ENCODE measurements at regions of chr1 and their contacts with region 1.

Region 1: DNA sequence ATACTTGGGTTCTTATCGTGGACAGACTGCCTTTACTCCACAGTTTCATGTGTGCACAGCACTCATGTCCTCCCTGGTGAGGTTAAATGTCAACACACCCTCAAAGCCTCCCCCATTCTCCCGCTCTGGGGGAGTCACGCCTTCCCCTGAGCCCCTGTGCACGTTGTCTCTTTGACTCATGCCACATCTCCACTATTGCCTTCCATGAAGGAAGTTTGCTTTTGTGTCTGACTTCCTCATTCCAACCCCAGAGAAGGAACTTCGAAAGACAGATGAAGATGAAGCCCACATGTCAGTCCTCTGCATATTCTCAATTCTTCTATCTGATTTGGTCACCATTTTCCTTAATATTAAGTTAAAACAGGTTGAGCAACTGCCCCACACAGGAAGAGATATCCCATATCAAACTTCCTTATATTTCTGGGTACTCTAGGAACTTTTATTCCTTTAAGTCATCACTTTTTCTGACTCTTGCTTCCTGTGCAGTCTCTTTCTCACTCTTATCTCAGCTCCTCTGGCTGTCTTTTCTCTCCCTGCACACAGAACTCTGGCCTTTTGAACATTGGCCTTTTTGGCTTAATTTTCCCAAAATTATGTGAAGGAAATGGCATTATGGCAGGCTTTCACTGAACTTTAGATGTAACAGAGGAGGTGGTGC is 41.5 kb downstream of the C4BPA start:
- DNase-seq: no peak

Region 2: DNA sequence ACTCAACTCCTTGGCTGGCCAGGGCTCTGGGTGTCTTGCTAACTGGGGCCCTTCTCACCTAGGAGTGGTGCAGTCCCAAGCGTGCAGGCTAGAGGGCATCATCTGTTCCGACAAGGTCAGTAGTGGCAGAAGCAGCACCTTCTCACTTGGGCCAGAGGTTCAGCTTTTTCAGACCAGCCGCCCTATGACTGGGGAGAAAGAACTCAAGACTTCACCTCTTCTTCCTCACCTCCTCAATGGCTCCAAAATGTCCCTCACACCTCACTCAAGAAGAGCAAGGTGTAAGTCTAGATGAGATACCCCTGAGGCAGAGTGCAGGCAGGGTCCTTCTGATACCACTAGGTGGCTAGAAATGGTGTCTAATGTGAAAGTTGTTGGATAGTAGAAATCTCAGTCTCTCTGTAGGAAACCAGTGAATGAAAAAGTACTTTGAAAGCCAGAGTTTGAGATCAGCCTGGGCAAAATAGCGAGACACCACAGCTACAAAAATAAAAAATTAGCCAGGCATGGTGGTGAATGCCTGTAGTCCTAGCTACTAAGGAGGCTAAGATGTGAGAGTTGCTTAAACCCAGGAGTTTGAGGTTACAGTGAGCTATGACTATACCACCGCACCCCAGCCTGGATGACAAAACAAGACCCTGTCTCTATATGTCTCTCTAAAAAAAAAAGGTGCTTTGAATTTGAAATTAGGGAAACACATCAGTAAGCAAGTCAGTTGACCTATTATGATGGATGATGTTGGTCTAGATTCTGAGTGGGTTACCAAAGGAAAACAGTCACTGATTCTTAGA is 288.7 kb before region 1 on chr1:
- intact Hi-C with region 1: no loop called
- DNase-seq: no peak

Region 3: GRCh38 chr1:207134581-207134980 is 10.9 kb before region 1 on chr1:
- intact Hi-C with region 1: loop called (anchors 1 kb)
- DNase-seq: no peak

Measured in posterior cingulate gyrus (tissue), 11 donors.